ENCODE measurements at regions of chr17 and their contacts with region 1.

Region 1: DNA sequence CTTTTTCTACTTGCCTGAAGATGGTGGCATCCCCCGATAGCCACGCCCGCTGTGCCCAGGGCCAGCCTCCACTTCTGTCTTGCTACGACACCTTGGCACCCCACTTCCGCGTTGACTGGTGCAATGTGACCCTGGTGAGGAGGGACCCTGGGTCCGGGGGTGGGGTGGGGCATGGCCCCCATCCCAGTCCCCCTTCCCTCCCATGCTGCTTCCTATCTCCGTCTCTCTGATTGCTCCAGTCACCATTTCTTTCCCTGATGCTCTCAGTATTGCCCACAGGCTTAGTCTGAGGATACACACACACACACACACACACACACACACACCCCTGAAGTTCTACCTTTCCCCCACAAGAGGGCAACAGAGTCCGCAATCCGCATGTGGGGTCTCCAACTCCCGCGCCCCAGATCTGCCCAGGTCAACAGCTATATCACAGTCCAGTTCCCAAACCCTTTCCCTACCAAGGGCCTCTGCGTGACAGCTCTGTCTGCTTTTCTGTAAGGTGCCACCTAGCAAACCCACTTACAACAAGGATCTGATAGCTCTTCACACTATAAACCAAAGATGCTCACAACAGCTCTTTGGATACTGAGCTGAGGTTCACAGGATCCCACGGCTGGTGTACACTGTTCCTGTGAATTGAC is 3.4 kb downstream of the SGCA start:
- DNase-seq: peak in 1 of 2 experiments; percentile 73
- H3K4me3 ChIP-seq: no peak overlapping the region
- H3K27ac ChIP-seq: no peak overlapping the region
- H3K4me1 ChIP-seq: peaks cover 0 to 14% (median 8%) of the 10 kb centered on the region in 4 experiments; a peak in 5 of 7 replicates
- H3K27me3 ChIP-seq: no peaks in the 10 kb centered on the region
- CTCF ChIP-seq: peak; percentile 80 to 98 (median 96)
- EP300 ChIP-seq: no peak
- POLR2A ChIP-seq: no peak
- RAD21 ChIP-seq: peak; percentile 96 to 97

Region 2: GRCh38 chr17:49914084-49914465 is 255.2 kb before region 1 on chr17:
- CTCF ChIA-PET with region 1: no interaction called
- POLR2A ChIA-PET with region 1: no interaction called
- DNase-seq: no peak
- H3K4me3 ChIP-seq: no peak overlapping the region
- H3K27ac ChIP-seq: no peak overlapping the region
- H3K4me1 ChIP-seq: peaks cover 3 to 19% (median 12%) of the 10 kb centered on the region in 4 experiments
- H3K27me3 ChIP-seq: peaks cover 9 to 53% (median 47%) of the 10 kb centered on the region in 4 experiments
- CTCF ChIP-seq: no peak
- EP300 ChIP-seq: no peak
- POLR2A ChIP-seq: no peak
- RAD21 ChIP-seq: no peak

Region 3: DNA sequence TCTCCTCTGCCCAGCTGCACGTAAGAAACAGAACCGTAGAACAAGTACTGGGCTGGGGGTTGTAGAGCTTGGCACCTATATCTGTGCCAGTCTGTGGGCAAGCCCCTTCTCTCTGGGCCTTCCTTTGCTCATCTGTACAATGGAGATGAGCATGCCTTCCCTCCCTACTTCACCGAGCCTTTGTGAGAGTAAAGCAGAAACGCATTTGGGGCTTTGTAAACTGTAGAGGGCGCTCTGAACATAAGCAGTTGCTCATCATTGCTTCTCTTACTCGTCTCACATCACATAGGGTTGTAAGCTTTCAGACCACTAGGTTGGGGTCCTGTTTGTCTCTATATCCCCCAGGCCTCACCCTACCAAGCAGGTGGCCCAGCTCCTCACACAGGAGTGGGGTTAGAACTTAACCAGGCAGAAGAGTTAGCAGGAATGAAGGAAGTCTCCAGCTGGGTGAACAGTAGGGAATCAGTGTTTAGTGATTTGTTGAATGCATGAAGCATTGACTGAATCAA is 54.3 kb before region 1 on chr17:
- CTCF ChIA-PET with region 1: interaction called, 19 read pairs
- POLR2A ChIA-PET with region 1: no interaction called
- DNase-seq: peak in 1 of 2 experiments; percentile 66
- H3K4me3 ChIP-seq: no peak overlapping the region
- H3K27ac ChIP-seq: no peak overlapping the region
- H3K4me1 ChIP-seq: peaks cover 6 to 14% (median 11%) of the 10 kb centered on the region in 4 experiments
- H3K27me3 ChIP-seq: peaks cover 0 to 18% (median 12%) of the 10 kb centered on the region in 4 experiments; a peak in 5 of 7 replicates
- CTCF ChIP-seq: peak in 2 of 3 experiments; percentile 89 to 93; a peak in 3 of 4 replicates
- EP300 ChIP-seq: no peak
- POLR2A ChIP-seq: no peak
- RAD21 ChIP-seq: peak; percentile 68 to 73

Region 4: GRCh38 chr17:50151041-50151936 is 18.0 kb before region 1 on chr17:
- CTCF ChIA-PET with region 1: interaction called, 57 read pairs
- POLR2A ChIA-PET with region 1: interaction called, 3 read pairs
- DNase-seq: peak; percentile 71 to 90
- H3K4me3 ChIP-seq: peak overlapping the region; percentile 57 to 65 (median 62)
- H3K27ac ChIP-seq: no peak overlapping the region
- H3K4me1 ChIP-seq: peaks cover 0 to 29% (median 17%) of the 10 kb centered on the region in 4 experiments; a peak in 6 of 7 replicates
- H3K27me3 ChIP-seq: peaks cover 2 to 17% (median 15%) of the 10 kb centered on the region in 4 experiments; a peak in 6 of 7 replicates
- CTCF ChIP-seq: peak; percentile 29 to 53 (median 32); a peak in 3 of 4 replicates
- EP300 ChIP-seq: 0 out of 3 replicates have a peak, but pooled peaks of 1 of the 2 experiments have one; percentile 17
- POLR2A ChIP-seq: no peak
- RAD21 ChIP-seq: peak in 1 of 2 experiments; percentile 6; a peak in 2 of 4 replicates

Region 5: GRCh38 chr17:50213026-50214022 is 44.1 kb after region 1 on chr17:
- CTCF ChIA-PET with region 1: interaction called, 16 read pairs
- POLR2A ChIA-PET with region 1: interaction called, 3 read pairs
- DNase-seq: no peak
- H3K4me3 ChIP-seq: no peak overlapping the region
- H3K27ac ChIP-seq: no peak overlapping the region
- H3K4me1 ChIP-seq: peaks cover 13 to 36% (median 28%) of the 10 kb centered on the region in 4 experiments
- H3K27me3 ChIP-seq: no peaks in the 10 kb centered on the region; a peak in 1 of 7 replicates
- CTCF ChIP-seq: peak; percentile 35 to 56 (median 52); a peak in 3 of 4 replicates
- EP300 ChIP-seq: no peak
- POLR2A ChIP-seq: no peak
- RAD21 ChIP-seq: peak; percentile 18 to 43; a peak in 2 of 4 replicates

Region 6: GRCh38 chr17:50312308-50312707 is 143.1 kb after region 1 on chr17:
- CTCF ChIA-PET with region 1: interaction called, 12 read pairs
- POLR2A ChIA-PET with region 1: interaction called, 4 read pairs
- DNase-seq: no peak
- H3K4me3 ChIP-seq: no peak overlapping the region
- H3K27ac ChIP-seq: no peak overlapping the region
- H3K4me1 ChIP-seq: peaks cover 2 to 12% (median 7%) of the 10 kb centered on the region in 4 experiments; a peak in 4 of 7 replicates
- H3K27me3 ChIP-seq: no peaks in the 10 kb centered on the region
- CTCF ChIP-seq: no peak
- EP300 ChIP-seq: no peak
- POLR2A ChIP-seq: no peak
- RAD21 ChIP-seq: no peak

Region 7: DNA sequence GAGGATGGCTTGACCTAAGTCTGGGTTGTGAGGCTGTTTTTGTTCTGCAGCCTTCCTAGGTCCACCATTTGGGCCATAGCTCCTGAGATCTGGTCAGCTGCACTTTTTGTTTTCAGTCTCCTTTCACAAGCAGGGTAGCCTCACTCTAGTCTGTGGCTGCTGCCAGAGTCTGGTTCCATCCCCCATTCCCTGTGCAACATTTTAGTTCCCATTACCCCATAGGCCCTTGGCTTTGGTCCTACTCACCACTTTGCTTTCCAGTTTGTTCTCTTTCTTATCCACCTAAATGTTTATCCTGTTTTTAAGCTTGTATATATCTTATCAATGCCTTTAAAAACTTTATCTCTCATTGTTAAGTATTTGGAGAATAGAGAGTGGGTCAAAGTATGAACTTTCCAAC is 170.1 kb after region 1 on chr17:
- CTCF ChIA-PET with region 1: interaction called, 10 read pairs
- POLR2A ChIA-PET with region 1: no interaction called
- DNase-seq: no peak
- H3K4me3 ChIP-seq: no peak overlapping the region
- H3K27ac ChIP-seq: no peak overlapping the region
- H3K4me1 ChIP-seq: no peaks in the 10 kb centered on the region
- H3K27me3 ChIP-seq: no peaks in the 10 kb centered on the region
- CTCF ChIP-seq: no peak
- EP300 ChIP-seq: no peak
- POLR2A ChIP-seq: no peak
- RAD21 ChIP-seq: no peak